Left lung (tissue), 14 donors: ENCODE measurements at regions of chr7 and their contacts with region 1.

Region 1: GRCh38 chr7:35424869-35425495 is 171.1 kb upstream of the TBX20 start:
- DNase-seq: peak in 2 of 4 donors; percentile 40 to 53
- ATAC-seq: peak; percentile 97
- H3K4me3 ChIP-seq: no peak overlapping the region
- H3K27ac ChIP-seq: no peak overlapping the region
- H3K4me1 ChIP-seq: no peaks in the 10 kb centered on the region
- H3K27me3 ChIP-seq: no peaks in the 10 kb centered on the region
- CTCF ChIP-seq: peak; percentile 55 to 68

Region 2: DNA sequence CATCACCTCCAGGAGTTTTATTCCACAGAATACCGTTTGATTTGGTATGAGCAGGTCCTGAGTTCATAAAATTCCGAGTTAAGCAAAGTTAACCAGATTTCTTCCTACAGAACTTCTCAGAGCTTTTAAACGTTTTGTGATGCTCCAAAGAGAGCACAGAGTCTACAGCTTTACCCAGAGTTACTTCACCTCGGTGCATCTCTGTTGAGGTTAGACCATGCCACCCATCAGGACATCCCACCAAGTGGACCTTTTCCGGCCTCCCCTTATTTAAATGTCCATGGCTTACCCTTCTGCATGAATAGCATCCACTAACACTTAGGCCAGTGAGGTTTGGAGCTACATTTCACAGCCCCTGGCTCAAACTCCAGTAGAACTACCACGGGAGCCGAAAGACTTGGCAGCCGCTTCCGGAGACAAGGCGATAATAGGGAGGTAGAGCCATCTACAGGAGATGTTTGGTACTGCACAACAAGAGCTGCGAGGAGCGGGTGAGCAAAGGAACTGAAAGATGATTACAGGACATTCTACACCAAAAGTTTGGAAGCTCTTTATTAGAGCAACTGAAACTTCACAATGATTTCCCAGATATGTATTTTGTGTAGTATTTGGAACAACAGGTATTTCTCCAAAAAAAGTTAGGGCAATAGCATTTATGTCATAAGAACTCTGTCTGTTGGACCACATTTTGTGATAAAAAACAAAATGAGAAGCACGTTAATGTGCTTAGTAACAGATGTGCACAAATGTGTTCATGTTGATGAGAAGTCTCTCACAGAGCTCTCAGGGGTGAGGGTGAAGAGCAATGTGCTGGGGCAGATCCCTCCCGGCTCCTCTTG is 95.2 kb after region 1 on chr7:
- intact Hi-C with region 1: loop called in 1 of 2 experiments (anchors 10 kb)
- DNase-seq: peak in 3 of 4 donors; percentile 43 to 83 (median 73)
- ATAC-seq: peak; percentile 97
- H3K4me3 ChIP-seq: no peak overlapping the region
- H3K27ac ChIP-seq: no peak overlapping the region
- H3K4me1 ChIP-seq: no peaks in the 10 kb centered on the region
- H3K27me3 ChIP-seq: peaks cover 0 to 12% of the 10 kb centered on the region in 2 donors
- CTCF ChIP-seq: peak; percentile 86 to 91

Region 3: GRCh38 chr7:35565927-35566326 is 140.9 kb after region 1 on chr7:
- intact Hi-C with region 1: no loop called
- DNase-seq: no peak
- ATAC-seq: no peak
- H3K4me3 ChIP-seq: no peak overlapping the region
- H3K27ac ChIP-seq: no peak overlapping the region
- H3K4me1 ChIP-seq: no peaks in the 10 kb centered on the region
- H3K27me3 ChIP-seq: peaks cover 0 to under 1% of the 10 kb centered on the region in 2 donors
- CTCF ChIP-seq: no peak

Region 4: GRCh38 chr7:35624299-35625186 is 199.6 kb after region 1 on chr7:
- intact Hi-C with region 1: loop called in 1 of 2 experiments (anchors 5 kb)
- DNase-seq: peak in 2 of 4 donors; percentile 35 to 40
- ATAC-seq: peak; percentile 89
- H3K4me3 ChIP-seq: no peak overlapping the region
- H3K27ac ChIP-seq: no peak overlapping the region
- H3K4me1 ChIP-seq: no peaks in the 10 kb centered on the region
- H3K27me3 ChIP-seq: no peaks in the 10 kb centered on the region
- CTCF ChIP-seq: peak; percentile 76 to 85